ENCODE measurements at regions of chr1 and their contacts with region 1.

Region 1: DNA sequence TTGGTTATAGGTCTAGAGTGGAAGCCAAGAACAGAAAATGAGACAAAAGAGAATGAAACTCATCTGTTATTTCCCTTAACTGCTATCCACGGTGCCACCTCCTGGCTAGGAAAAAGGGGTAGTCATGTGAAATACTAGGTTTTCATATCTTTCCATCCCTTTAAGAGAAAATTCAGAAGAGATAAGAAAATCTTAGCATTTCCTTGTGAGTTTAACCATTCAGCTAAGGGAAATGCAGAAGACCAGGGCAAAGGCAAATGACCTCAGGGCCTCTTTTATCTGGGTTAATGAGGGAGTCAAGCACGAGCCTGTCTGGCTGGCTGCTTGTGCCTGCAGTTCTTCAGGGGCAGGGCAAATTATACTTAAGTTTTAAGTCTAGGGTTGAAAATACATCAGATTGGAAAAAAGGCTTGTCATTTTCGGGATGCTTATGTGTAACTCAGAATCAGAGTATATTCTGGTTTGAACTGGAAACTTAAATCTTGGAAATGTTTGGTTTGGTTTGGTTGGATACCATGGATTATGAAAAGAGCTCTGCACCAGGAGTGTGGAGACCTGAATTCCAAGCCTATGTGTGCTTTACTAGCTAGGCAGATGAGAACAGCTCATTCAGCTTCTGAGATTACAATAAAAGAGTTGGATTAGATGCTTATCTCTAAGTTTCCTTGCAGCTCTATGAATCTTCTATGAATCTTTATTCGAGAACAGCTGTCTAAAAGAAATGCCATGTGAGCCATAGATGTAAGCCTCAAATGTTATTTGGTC is 19.9 kb downstream of the NIBAN1 start:
- DNase-seq: no peak
- H3K4me3 Mint-ChIP-seq: peak overlapping the region; percentile 50
- H3K27ac Mint-ChIP-seq: peak overlapping the region; percentile 78
- H3K4me1 Mint-ChIP-seq: peaks cover 19% of the 10 kb centered on the region
- H3K27me3 Mint-ChIP-seq: peaks cover 2% of the 10 kb centered on the region

Region 2: GRCh38 chr1:184494929-184495328 is 459.5 kb before region 1 on chr1:
- intact Hi-C with region 1: loop called (anchors 5 kb)
- DNase-seq: no peak
- H3K4me3 Mint-ChIP-seq: no peak overlapping the region
- H3K27ac Mint-ChIP-seq: no peak overlapping the region
- H3K4me1 Mint-ChIP-seq: peaks cover 20% of the 10 kb centered on the region
- H3K27me3 Mint-ChIP-seq: peaks cover 2% of the 10 kb centered on the region

Region 3: GRCh38 chr1:184881941-184882913 is 72.2 kb before region 1 on chr1:
- intact Hi-C with region 1: loop called (anchors 2 kb)
- DNase-seq: no peak
- H3K4me3 Mint-ChIP-seq: peak overlapping the region; percentile 32
- H3K27ac Mint-ChIP-seq: peak overlapping the region; percentile 78
- H3K4me1 Mint-ChIP-seq: peaks cover 23% of the 10 kb centered on the region
- H3K27me3 Mint-ChIP-seq: no peaks in the 10 kb centered on the region

Region 4: GRCh38 chr1:184892116-184892515 is 62.3 kb before region 1 on chr1:
- intact Hi-C with region 1: loop called (anchors 1 kb)
- DNase-seq: no peak
- H3K4me3 Mint-ChIP-seq: no peak overlapping the region
- H3K27ac Mint-ChIP-seq: peak overlapping the region; percentile 61
- H3K4me1 Mint-ChIP-seq: peaks cover 39% of the 10 kb centered on the region
- H3K27me3 Mint-ChIP-seq: no peaks in the 10 kb centered on the region

Measured in activated T-helper 1 cell treated with anti-CD3 and anti-CD28 coated beads, Interleukin-12 subunit alpha, Interleukin-12 subunit beta, Interleukin-2, Interleukin-4 antibody, amounts not matched to agents 30 ng/mL and 10 ng/mL and 1 ng/mL, durations not matched to agents 14 hours and 24 hours and 36 hours (primary cell).